Mammary epithelial cell (primary cell): ENCODE measurements at regions of chr3 and their contacts with region 1.

Region 1: DNA sequence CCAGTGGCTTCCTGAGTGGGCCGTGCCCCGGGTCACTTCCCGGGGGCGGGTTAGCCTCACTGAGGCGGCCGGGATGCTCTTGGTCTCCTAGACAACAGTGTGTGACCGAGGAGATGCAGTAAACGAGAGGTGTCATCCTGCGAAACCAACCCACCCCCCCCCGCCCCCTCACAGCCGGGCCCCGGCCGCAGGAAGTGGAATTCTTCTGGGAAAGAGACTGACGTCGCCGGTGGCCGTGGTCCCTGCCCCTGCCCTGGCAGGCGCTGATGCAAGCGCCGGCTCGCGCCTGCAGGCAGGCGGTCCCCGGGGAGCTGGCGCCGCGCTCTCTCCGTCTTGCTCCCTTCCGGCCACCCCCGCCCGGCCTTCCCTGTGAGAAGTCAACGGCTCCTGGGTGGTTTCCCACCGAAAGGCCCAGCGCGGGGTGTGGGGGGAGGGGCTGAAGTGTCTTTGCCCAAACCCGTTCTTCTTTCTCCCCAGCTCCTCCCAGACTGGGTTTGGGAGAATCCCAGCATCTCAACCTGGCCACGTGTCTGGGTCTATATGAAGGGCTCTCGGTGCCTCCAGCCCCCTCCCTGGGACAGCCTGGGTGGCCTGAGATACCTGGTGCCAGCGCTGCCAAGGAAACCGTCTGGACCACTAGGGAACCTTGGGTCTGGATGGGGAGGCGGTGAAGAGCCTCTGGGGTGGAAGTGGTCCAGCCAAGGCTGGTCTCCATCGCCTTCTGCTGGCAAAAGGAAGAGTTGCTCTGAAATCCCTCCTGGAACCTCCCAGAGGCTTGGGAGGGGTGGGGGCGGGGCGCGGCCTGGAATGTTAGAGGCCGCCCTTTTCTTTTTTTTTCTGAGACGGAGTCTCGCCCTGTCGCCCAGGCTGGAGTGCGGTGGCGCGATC is 47.3 kb downstream of the BHLHE40 start:
- DNase-seq: peak; percentile 98
- H3K4me3 ChIP-seq: peak overlapping the region; percentile 23 to 44 (median 24)
- H3K27ac ChIP-seq: peak overlapping the region; percentile 100
- H3K4me1 ChIP-seq: peaks cover 34% of the 10 kb centered on the region
- H3K27me3 ChIP-seq: no peaks in the 10 kb centered on the region
- CTCF ChIP-seq: peak; percentile 55 to 81

Region 2: DNA sequence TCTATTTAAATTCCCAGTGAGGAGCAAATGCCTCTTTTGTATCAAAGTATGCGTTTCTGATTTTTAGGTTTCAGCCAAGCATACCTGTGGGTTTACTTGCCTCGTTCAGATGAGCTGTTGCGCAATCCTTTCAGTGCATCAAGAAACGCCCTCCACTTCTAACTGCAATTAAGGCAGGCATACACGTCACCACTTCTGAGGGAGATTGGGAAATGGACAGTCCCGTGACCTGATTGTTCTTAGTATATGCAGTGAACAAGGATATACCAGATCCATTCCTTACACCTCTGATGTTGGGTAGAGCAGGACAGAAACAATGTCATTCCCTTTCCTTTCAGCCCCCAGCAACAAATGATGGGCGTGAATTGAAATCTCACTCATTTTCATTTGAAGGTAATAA is 314.4 kb before region 1 on chr3:
- CTCF ChIA-PET with region 1: interaction called, 7 read pairs
- dilution Hi-C with region 1: no loop called
- in situ Hi-C with region 1: no loop called
- intact Hi-C with region 1: loop called (anchors 1 kb)
- DNase-seq: peak; percentile 99
- H3K4me3 ChIP-seq: no peak overlapping the region
- H3K27ac ChIP-seq: peak overlapping the region; percentile 96
- H3K4me1 ChIP-seq: peaks cover 22% of the 10 kb centered on the region
- H3K27me3 ChIP-seq: no peaks in the 10 kb centered on the region
- CTCF ChIP-seq: no peak

Region 3: DNA sequence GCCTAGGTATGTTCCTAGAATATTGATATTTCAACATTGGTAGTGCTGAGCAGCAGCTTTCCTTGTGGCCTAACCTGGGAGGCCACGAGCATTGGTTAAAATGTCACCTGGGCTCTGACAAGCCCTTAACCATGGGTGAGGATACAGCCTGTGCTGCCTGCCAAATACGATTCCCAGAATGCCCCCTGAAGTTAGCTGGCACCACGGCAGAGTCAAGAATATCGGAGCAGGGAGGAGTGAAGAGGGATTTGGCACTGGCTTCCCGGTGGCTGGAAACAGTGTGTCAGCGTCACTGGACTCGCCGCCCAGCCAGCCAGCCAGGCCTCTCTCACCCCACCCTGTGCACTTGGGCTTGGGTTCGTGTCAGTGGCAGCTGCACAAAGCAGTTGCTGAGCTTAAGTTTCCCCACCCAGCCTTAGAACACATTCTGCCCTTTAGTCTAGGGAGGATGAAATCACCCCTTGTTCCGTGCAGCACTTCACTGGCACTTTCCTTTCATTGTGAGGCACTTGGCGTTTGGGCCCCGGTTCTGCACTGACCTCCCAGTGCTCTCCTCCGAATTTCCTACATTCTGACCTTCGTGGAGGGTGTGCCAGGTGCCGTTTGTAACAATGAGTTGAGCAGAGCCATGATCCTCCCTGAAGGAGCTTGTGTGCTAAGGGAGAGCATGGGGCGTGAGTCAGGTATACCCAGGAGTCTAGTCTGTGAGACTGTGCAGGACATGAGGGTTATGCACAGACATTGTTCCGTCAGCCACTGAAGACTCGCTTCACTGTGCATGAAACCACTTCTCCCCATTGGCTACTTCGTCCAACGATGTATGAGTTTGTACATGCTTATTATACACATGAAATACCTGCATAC is 200.1 kb before region 1 on chr3:
- CTCF ChIA-PET with region 1: no interaction called
- dilution Hi-C with region 1: no loop called
- in situ Hi-C with region 1: no loop called
- intact Hi-C with region 1: loop called (anchors 5 kb)
- DNase-seq: no peak
- H3K4me3 ChIP-seq: no peak overlapping the region
- H3K27ac ChIP-seq: no peak overlapping the region
- H3K4me1 ChIP-seq: peaks cover 51% of the 10 kb centered on the region
- H3K27me3 ChIP-seq: no peaks in the 10 kb centered on the region
- CTCF ChIP-seq: no peak

Region 4: DNA sequence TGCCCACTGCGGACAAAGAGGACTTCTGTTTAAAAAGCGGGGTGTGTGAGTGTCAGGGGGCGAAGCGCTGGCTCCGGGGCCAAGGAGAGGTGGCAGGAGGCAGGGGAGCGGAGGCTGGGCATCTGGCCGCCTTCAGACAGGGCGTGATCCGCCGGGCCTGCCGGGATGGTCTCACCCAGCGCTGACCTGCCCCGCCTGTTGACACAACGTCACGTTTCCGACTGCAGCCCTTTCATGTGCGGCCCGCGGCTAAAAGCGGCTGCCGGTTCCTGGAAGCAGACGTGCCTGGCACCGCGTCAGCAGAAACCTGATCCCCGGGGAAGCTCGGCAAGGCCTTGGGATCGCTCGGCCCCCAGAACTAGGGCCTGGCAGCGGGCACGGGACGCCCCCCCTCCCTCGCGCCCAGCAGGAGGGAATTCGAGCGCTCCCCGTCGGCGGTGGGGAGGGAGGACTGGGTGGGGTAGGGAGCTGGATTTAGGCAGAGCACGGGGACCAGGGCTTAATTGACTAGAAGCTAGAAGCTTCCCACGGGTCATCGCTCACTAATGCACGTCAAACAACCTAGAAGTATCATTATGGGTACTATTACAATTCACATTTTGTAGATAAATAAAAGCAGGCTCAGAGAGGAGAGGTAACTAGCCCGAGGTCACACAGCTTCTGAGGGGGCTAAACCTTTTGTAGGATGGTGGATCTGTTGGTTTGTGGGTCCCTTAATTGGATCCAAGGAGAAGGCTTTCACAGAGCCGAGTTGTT is 39.6 kb before region 1 on chr3:
- CTCF ChIA-PET with region 1: interaction called, 14 read pairs
- dilution Hi-C with region 1: no loop called
- in situ Hi-C with region 1: loop called (anchors 5 kb)
- intact Hi-C with region 1: loop called (anchors 1 kb)
- DNase-seq: peak; percentile 99
- H3K4me3 ChIP-seq: peak overlapping the region; percentile 1 to 31 (median 4)
- H3K27ac ChIP-seq: peak overlapping the region; percentile 96
- H3K4me1 ChIP-seq: peaks cover 49% of the 10 kb centered on the region
- H3K27me3 ChIP-seq: no peaks in the 10 kb centered on the region
- CTCF ChIP-seq: no peak

Region 5: GRCh38 chr3:5057857-5058324 is 31.3 kb after region 1 on chr3:
- CTCF ChIA-PET with region 1: interaction called, 3 read pairs
- dilution Hi-C with region 1: no loop called
- in situ Hi-C with region 1: no loop called
- intact Hi-C with region 1: loop called (anchors 1 kb)
- DNase-seq: peak; percentile 86
- H3K4me3 ChIP-seq: no peak overlapping the region
- H3K27ac ChIP-seq: no peak overlapping the region
- H3K4me1 ChIP-seq: peaks cover 3% of the 10 kb centered on the region
- H3K27me3 ChIP-seq: no peaks in the 10 kb centered on the region
- CTCF ChIP-seq: peak; percentile 76

Region 6: DNA sequence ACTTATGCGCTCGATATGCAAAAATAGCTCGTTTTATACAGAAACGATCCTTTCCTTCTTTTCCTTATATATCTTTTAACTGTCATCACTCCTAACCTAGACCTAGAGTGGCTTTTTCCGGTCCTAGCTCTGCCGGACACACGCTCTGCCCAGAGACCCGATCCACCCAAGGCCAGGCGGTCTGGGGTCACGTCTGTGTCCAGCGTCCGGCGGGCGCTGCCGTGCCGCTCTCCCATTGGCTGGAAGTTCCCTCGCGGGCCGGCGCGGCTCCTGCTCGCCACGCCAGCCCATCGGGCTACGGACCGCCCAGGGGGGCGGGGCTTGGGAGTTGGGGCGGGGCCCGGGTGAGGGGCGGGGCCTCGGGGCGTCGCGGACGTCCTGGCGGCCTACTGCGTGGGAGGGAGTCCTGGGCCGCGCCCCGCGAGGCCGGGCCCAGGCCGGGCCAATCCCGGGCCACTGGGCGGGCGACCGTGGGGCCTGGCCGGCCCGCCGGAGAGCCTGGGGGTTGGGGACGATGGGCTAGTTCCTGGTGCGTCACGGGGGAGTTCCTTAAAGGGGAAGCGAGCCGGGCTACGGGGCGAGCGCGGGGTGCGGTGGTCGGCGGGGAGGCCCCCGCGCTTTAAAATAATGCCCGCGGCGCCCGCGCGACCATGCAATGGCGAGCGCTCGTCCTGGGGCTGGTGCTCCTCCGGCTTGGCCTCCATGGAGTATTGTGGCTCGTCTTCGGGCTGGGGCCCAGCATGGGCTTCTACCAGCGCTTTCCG is 160.8 kb after region 1 on chr3 and contains the start of gene EDEM1:
- CTCF ChIA-PET with region 1: no interaction called
- dilution Hi-C with region 1: no loop called
- in situ Hi-C with region 1: no loop called
- intact Hi-C with region 1: loop called (anchors 2 kb)
- DNase-seq: peak; percentile 95
- H3K4me3 ChIP-seq: peak within 1 kb of the TSS; percentile 61 to 89 (median 86)
- H3K27ac ChIP-seq: peak within 1 kb of the TSS; percentile 94
- H3K4me1 ChIP-seq: peaks cover 11% of the 10 kb centered on the region
- H3K27me3 ChIP-seq: no peaks in the 10 kb centered on the region
- CTCF ChIP-seq: no peak
- total RNA-seq, gene EDEM1: 78.0 to 98.0 TPM